ENCODE measurements at regions of chr16 and their contacts with region 1.

Region 1: GRCh38 chr16:67428146-67428731 is 2.7 kb upstream of the HSD11B2 start:
- DNase-seq: no peak
- ATAC-seq: peak; percentile 88
- H3K4me3 ChIP-seq: no peak overlapping the region
- H3K27ac ChIP-seq: no peak overlapping the region
- H3K4me1 ChIP-seq: peaks cover 4% of the 10 kb centered on the region; the same call in 1 of the 2 replicates
- H3K27me3 ChIP-seq: peaks cover 12 to 15% of the 10 kb centered on the region in 2 experiments
- CTCF ChIP-seq: peak; percentile 83 to 96 (median 86)
- EP300 ChIP-seq: no peak
- POLR2A ChIP-seq: no peak
- RAD21 ChIP-seq: peak; percentile 72

Region 2: GRCh38 chr16:67260426-67261075 is 167.7 kb before region 1 on chr16:
- CTCF ChIA-PET with region 1: interaction called, 10 read pairs
- POLR2A ChIA-PET with region 1: no interaction called
- RAD21 ChIA-PET with region 1: interaction called, 4 read pairs
- SMC1A ChIA-PET with region 1: interaction called, 3 read pairs
- in situ Hi-C with region 1: no loop called
- intact Hi-C with region 1: no loop called
- DNase-seq: no peak
- ATAC-seq: peak; percentile 88
- H3K4me3 ChIP-seq: no peak overlapping the region
- H3K27ac ChIP-seq: no peak overlapping the region
- H3K4me1 ChIP-seq: no peaks in the 10 kb centered on the region
- H3K27me3 ChIP-seq: no peaks in the 10 kb centered on the region
- CTCF ChIP-seq: peak; percentile 77 to 81 (median 80)
- EP300 ChIP-seq: no peak
- POLR2A ChIP-seq: no peak
- RAD21 ChIP-seq: peak; percentile 94

Region 3: GRCh38 chr16:67447508-67448076 is 19.4 kb after region 1 on chr16:
- CTCF ChIA-PET with region 1: interaction called, 84 read pairs
- POLR2A ChIA-PET with region 1: no interaction called
- RAD21 ChIA-PET with region 1: interaction called, 18 read pairs
- SMC1A ChIA-PET with region 1: interaction called, 13 read pairs
- in situ Hi-C with region 1: no loop called
- intact Hi-C with region 1: loop called (anchors 1 kb)
- DNase-seq: peak; percentile 15
- ATAC-seq: peak; percentile 98
- H3K4me3 ChIP-seq: no peak overlapping the region
- H3K27ac ChIP-seq: no peak overlapping the region
- H3K4me1 ChIP-seq: no peaks in the 10 kb centered on the region
- H3K27me3 ChIP-seq: no peaks in the 10 kb centered on the region
- CTCF ChIP-seq: peak; percentile 71 to 80 (median 75)
- EP300 ChIP-seq: no peak
- POLR2A ChIP-seq: no peak
- RAD21 ChIP-seq: peak; percentile 67

Region 4: GRCh38 chr16:67461600-67462592 is 33.7 kb after region 1 on chr16:
- CTCF ChIA-PET with region 1: interaction called, 81 read pairs
- POLR2A ChIA-PET with region 1: interaction called, 4 read pairs
- RAD21 ChIA-PET with region 1: interaction called, 31 read pairs
- SMC1A ChIA-PET with region 1: interaction called, 19 read pairs
- in situ Hi-C with region 1: no loop called
- intact Hi-C with region 1: loop called (anchors 1 kb)
- DNase-seq: no peak
- ATAC-seq: no peak
- H3K4me3 ChIP-seq: no peak overlapping the region
- H3K27ac ChIP-seq: no peak overlapping the region
- H3K4me1 ChIP-seq: peaks cover 4% of the 10 kb centered on the region
- H3K27me3 ChIP-seq: no peaks in the 10 kb centered on the region
- CTCF ChIP-seq: no peak
- EP300 ChIP-seq: no peak
- POLR2A ChIP-seq: no peak
- RAD21 ChIP-seq: no peak

Region 5: GRCh38 chr16:67480833-67481560 is 52.8 kb after region 1 on chr16 and contains the start of gene ATP6V0D1:
- CTCF ChIA-PET with region 1: interaction called, 20 read pairs
- POLR2A ChIA-PET with region 1: interaction called, 4 read pairs
- RAD21 ChIA-PET with region 1: interaction called, 4 read pairs
- SMC1A ChIA-PET with region 1: interaction called, 13 read pairs
- in situ Hi-C with region 1: no loop called
- intact Hi-C with region 1: no loop called
- DNase-seq: peak; percentile 94
- ATAC-seq: peak; percentile 92
- H3K4me3 ChIP-seq: peak within 1 kb of the TSS; percentile 87
- H3K27ac ChIP-seq: peak within 1 kb of the TSS; percentile 86
- H3K4me1 ChIP-seq: peaks cover 19% of the 10 kb centered on the region
- H3K27me3 ChIP-seq: no peaks in the 10 kb centered on the region
- CTCF ChIP-seq: peak; percentile 82 to 97 (median 93); a peak in 5 of 6 replicates
- EP300 ChIP-seq: 0 out of 4 replicates have a peak, but pooled peaks of 1 of the 2 experiments have one; percentile 13
- POLR2A ChIP-seq: peak; percentile 86
- RAD21 ChIP-seq: peak; percentile 81
- polyA plus RNA-seq, gene ATP6V0D1: 28.1 to 30.2 TPM

Region 6: GRCh38 chr16:67514382-67514828 is 86.2 kb after region 1 on chr16:
- CTCF ChIA-PET with region 1: interaction called, 3 read pairs
- POLR2A ChIA-PET with region 1: no interaction called
- RAD21 ChIA-PET with region 1: interaction called, 5 read pairs
- SMC1A ChIA-PET with region 1: interaction called, 9 read pairs
- in situ Hi-C with region 1: no loop called
- intact Hi-C with region 1: loop called (anchors 1 kb)
- DNase-seq: peak; percentile 90
- ATAC-seq: peak; percentile 71
- H3K4me3 ChIP-seq: no peak overlapping the region
- H3K27ac ChIP-seq: peak overlapping the region; percentile 38; the same call in 1 of the 2 replicates
- H3K4me1 ChIP-seq: peaks cover 45% of the 10 kb centered on the region
- H3K27me3 ChIP-seq: no peaks in the 10 kb centered on the region
- CTCF ChIP-seq: peak; percentile 66 to 82 (median 71); a peak in 5 of 6 replicates
- EP300 ChIP-seq: no peak
- POLR2A ChIP-seq: no peak
- RAD21 ChIP-seq: peak; percentile 77